Heart left ventricle (tissue), 16 donors: ENCODE measurements at regions of chr14 and their contacts with region 1.

Region 1: DNA sequence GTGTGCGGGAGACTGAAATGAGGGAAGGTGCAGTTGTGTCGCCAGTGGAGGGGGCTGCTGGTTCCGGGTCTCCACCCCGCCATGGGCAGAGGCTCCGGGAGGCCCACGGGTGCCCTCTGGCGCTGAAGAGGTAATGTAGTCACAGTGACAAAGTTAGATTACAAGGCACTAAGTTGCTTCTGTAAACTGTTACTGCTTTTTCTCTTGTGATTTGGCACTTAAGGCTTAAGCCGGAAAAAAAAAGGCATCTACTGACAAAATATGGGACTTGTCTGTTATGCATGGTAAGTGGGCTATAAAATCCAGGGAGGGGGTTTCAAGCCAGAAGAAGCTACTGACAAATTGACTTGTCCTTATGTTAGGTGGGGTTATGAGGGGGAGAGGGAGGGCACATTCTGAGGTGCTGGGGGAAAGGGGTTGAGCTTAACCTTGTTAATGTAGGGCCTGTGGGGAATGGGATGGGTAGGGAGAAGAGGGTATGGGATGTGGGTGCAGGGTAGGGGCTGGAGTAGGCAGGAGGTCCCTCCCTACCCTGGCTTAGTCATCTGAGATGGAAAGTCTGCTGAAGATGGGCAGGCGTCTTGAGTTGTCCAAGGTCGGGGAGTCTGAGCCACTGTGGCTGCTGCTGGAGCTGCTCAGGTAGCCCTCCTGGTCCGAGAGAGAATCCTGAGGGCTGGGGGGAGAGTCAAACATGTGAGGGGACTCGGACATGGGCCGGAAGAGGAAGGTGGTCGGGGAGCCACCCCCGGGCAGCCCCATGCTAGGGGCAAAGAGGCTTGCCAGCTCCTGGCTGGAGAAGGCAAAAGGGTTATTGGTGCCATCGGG is 3.7 kb downstream of the ZFP36L1 start:
- DNase-seq: peak; percentile 86 to 91 (median 88)
- ATAC-seq: peak in 3 of 4 donors; percentile 34 to 36 (median 35)
- H3K4me3 ChIP-seq: peak overlapping the region; percentile 60 to 94 (median 84)
- H3K27ac ChIP-seq: peak overlapping the region; percentile 98 to 100 (median 99)
- H3K4me1 ChIP-seq: peaks cover 0 to 48% (median 25%) of the 10 kb centered on the region in 12 donors
- H3K27me3 ChIP-seq: no peaks in the 10 kb centered on the region
- CTCF ChIP-seq: peak; percentile 55 to 83 (median 78)
- POLR2A ChIP-seq: no peak

Region 2: GRCh38 chr14:68526420-68527105 is 262.6 kb before region 1 on chr14:
- intact Hi-C with region 1: loop called in 6 of 10 experiments (anchors 5 to 10 kb)
- DNase-seq: peak in 3 of 5 donors; percentile 56 to 69 (median 68)
- ATAC-seq: peak in 3 of 4 donors; percentile 58 to 76 (median 70)
- H3K4me3 ChIP-seq: no peak overlapping the region
- H3K27ac ChIP-seq: peak overlapping the region in 11 of 12 donors; percentile 3 to 76 (median 43)
- H3K4me1 ChIP-seq: peaks cover 0 to 54% (median 32%) of the 10 kb centered on the region in 12 donors
- H3K27me3 ChIP-seq: no peaks in the 10 kb centered on the region
- CTCF ChIP-seq: no peak
- POLR2A ChIP-seq: no peak

Region 3: GRCh38 chr14:68598621-68599447 is 190.4 kb before region 1 on chr14:
- intact Hi-C with region 1: loop called in 1 of 10 experiments (anchors 5 kb)
- DNase-seq: peak; percentile 72 to 82 (median 77)
- ATAC-seq: peak; percentile 63 to 95 (median 92)
- H3K4me3 ChIP-seq: peak overlapping the region in 4 of 12 donors; percentile 6 to 30 (median 9)
- H3K27ac ChIP-seq: peak overlapping the region; percentile 59 to 98 (median 91)
- H3K4me1 ChIP-seq: peaks cover 0 to 70% (median 21%) of the 10 kb centered on the region in 12 donors
- H3K27me3 ChIP-seq: no peaks in the 10 kb centered on the region
- CTCF ChIP-seq: no peak
- POLR2A ChIP-seq: no peak

Region 4: DNA sequence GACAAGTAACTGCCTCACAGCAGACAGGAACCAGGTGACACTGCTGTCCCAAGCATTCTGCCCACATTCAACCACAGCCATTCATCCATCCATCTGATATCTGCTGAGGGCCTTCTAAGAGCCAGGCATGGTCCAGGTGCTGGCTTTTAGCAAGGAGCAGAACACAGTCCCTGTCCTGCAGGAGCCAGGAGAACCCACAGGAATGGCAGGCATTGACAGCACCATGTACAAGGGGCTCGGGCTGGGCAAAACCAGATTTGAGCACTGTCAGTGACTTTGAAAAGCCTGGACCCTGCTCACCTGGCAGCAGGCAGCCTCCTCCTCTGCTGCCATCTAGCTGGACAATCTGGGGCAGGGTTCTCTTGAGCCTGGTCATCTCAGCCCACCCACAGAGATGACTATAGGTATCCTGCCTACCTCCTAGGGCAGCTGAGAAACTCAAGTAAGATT is 133.3 kb before region 1 on chr14:
- intact Hi-C with region 1: loop called in 1 of 10 experiments (anchors 10 kb)
- DNase-seq: no peak
- ATAC-seq: peak in 1 of 4 donors; percentile 26
- H3K4me3 ChIP-seq: no peak overlapping the region
- H3K27ac ChIP-seq: peak overlapping the region in 1 of 12 donors; percentile 85
- H3K4me1 ChIP-seq: peaks cover 0 to 59% (median 31%) of the 10 kb centered on the region in 12 donors
- H3K27me3 ChIP-seq: no peaks in the 10 kb centered on the region
- CTCF ChIP-seq: peak in 11 of 12 donors; percentile 5 to 33 (median 19)
- POLR2A ChIP-seq: no peak

Region 5: DNA sequence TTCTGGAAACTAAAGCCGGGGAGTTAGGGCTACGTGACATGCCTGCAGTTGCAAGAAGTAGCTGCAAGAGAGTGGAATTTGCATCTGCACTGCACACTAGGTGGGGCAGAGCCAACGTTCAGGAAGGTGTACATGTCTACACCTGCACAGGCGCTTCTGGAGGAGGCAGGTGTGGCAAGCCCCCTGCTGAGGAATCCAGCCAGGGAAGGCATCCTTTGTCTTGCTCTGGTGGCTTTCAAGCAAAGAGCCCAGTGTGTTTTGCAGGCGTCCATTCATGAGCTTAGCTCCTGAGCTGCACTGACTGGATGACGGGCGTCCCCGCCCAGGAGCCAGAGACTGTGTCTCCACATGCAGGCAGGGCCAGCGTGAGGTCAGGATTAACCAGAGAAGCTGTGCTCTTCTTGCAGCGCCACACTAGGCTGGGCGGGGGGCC is 112.7 kb before region 1 on chr14:
- intact Hi-C with region 1: loop called in 5 of 10 experiments (anchors 5 kb)
- DNase-seq: no peak
- ATAC-seq: no peak
- H3K4me3 ChIP-seq: no peak overlapping the region
- H3K27ac ChIP-seq: no peak overlapping the region
- H3K4me1 ChIP-seq: peaks cover 9 to 39% (median 28%) of the 10 kb centered on the region in 12 donors
- H3K27me3 ChIP-seq: no peaks in the 10 kb centered on the region
- CTCF ChIP-seq: no peak
- POLR2A ChIP-seq: no peak

Region 6: GRCh38 chr14:68734231-68734775 is 54.9 kb before region 1 on chr14:
- intact Hi-C with region 1: loop called in 8 of 10 experiments (anchors 2 to 5 kb)
- DNase-seq: no peak
- ATAC-seq: peak in 1 of 4 donors; percentile 7
- H3K4me3 ChIP-seq: no peak overlapping the region
- H3K27ac ChIP-seq: peak overlapping the region in 5 of 12 donors; percentile 30 to 79 (median 47)
- H3K4me1 ChIP-seq: peaks cover 0 to 82% (median 47%) of the 10 kb centered on the region in 12 donors
- H3K27me3 ChIP-seq: no peaks in the 10 kb centered on the region
- CTCF ChIP-seq: no peak
- POLR2A ChIP-seq: no peak